Uterus (tissue), 4 donors: ENCODE measurements at regions of chr16 and their contacts with region 1.

Region 1: GRCh38 chr16:30984669-30985400 is at the start of gene HSD3B7:
- DNase-seq: peak; percentile 90 to 92
- H3K4me3 ChIP-seq: peak within 1 kb of the TSS; percentile 33 to 46
- H3K27ac ChIP-seq: peak within 1 kb of the TSS; percentile 67 to 71
- H3K4me1 ChIP-seq: peaks cover 0 to 7% of the 10 kb centered on the region in 2 donors
- H3K27me3 ChIP-seq: no peaks in the 10 kb centered on the region
- CTCF ChIP-seq: peak; percentile 95 to 98 (median 96)
- POLR2A ChIP-seq: peak in 1 of 2 donors; percentile 28
- total RNA-seq, gene HSD3B7: 7.2 to 18.0 (median 11.3) TPM

Region 2: GRCh38 chr16:31216422-31217135 is 231.7 kb after region 1 on chr16 and contains the start of gene PYDC1:
- intact Hi-C with region 1: no loop called
- DNase-seq: no peak
- H3K4me3 ChIP-seq: no peak within 1 kb of the TSS
- H3K27ac ChIP-seq: no peak within 1 kb of the TSS
- H3K4me1 ChIP-seq: peaks cover 0 to 9% of the 10 kb centered on the region in 2 donors
- H3K27me3 ChIP-seq: peaks cover 0 to 12% of the 10 kb centered on the region in 2 donors
- CTCF ChIP-seq: no peak
- POLR2A ChIP-seq: no peak
- total RNA-seq, gene PYDC1: not detected

Region 3: GRCh38 chr16:31253642-31254045 is 268.8 kb after region 1 on chr16:
- intact Hi-C with region 1: no loop called
- DNase-seq: no peak
- H3K4me3 ChIP-seq: no peak overlapping the region
- H3K27ac ChIP-seq: no peak overlapping the region
- H3K4me1 ChIP-seq: no peaks in the 10 kb centered on the region
- H3K27me3 ChIP-seq: no peaks in the 10 kb centered on the region
- CTCF ChIP-seq: no peak
- POLR2A ChIP-seq: no peak

Region 4: GRCh38 chr16:31440516-31441184 is 455.8 kb after region 1 on chr16:
- intact Hi-C with region 1: loop called (anchors 10 kb)
- DNase-seq: no peak
- H3K4me3 ChIP-seq: no peak overlapping the region
- H3K27ac ChIP-seq: no peak overlapping the region
- H3K4me1 ChIP-seq: no peaks in the 10 kb centered on the region
- H3K27me3 ChIP-seq: no peaks in the 10 kb centered on the region
- CTCF ChIP-seq: no peak
- POLR2A ChIP-seq: no peak